OCI-LY7 (cell line): ENCODE measurements at regions of chr11 and their contacts with region 1.

Region 1: GRCh38 chr11:33376331-33377310 is 119.4 kb downstream of the HIPK3 start:
- DNase-seq: peak; percentile 76
- H3K4me3 ChIP-seq: peak overlapping the region; percentile 75
- H3K27ac ChIP-seq: peak overlapping the region; percentile 96
- H3K4me1 ChIP-seq: peaks cover 52% of the 10 kb centered on the region
- CTCF ChIP-seq: 0 out of 2 replicates have a peak, but pooled peaks have one; percentile 26

Region 2: GRCh38 chr11:33257897-33258630 is 118.6 kb before region 1 on chr11:
- CTCF ChIA-PET with region 1: no interaction called
- POLR2A ChIA-PET with region 1: no interaction called
- intact Hi-C with region 1: loop called (anchors 1 kb)
- DNase-seq: peak; percentile 84
- H3K4me3 ChIP-seq: peak overlapping the region; percentile 83
- H3K27ac ChIP-seq: peak overlapping the region; percentile 85
- H3K4me1 ChIP-seq: peaks cover 27% of the 10 kb centered on the region
- CTCF ChIP-seq: peak; percentile 43

Region 3: DNA sequence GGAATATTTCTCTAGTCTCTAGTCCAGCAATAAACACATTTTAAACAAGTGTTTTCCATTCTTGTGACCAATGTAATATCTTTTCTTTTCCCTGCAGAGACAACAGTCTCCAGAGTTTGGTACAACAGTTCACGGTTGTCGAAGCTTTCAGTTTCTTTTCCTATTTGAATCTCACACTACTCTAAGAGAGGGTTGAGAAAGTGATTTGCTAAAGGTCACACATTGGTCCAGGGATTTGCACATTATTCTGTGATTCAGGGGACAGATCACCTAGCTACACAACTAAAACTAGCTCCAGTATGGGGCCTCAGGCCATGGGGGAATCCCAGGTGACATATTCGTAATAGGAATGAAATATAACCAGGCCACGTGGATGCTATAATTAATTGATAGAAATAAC is 13.0 kb after region 1 on chr11:
- CTCF ChIA-PET with region 1: no interaction called
- POLR2A ChIA-PET with region 1: interaction called, 20 read pairs
- intact Hi-C with region 1: loop called (anchors 1 kb)
- DNase-seq: peak; percentile 52
- H3K4me3 ChIP-seq: peak overlapping the region; percentile 57
- H3K27ac ChIP-seq: peak overlapping the region; percentile 96
- H3K4me1 ChIP-seq: peaks cover 95% of the 10 kb centered on the region
- CTCF ChIP-seq: no peak

Region 4: GRCh38 chr11:33542921-33543320 is 166.3 kb after region 1 on chr11:
- CTCF ChIA-PET with region 1: no interaction called
- POLR2A ChIA-PET with region 1: interaction called, 3 read pairs
- intact Hi-C with region 1: loop called (anchors 5 kb)
- DNase-seq: peak; percentile 51
- H3K4me3 ChIP-seq: no peak overlapping the region
- H3K27ac ChIP-seq: no peak overlapping the region
- H3K4me1 ChIP-seq: peaks cover 42% of the 10 kb centered on the region
- CTCF ChIP-seq: peak; percentile 82

Region 5: GRCh38 chr11:33736148-33736809 is 359.7 kb after region 1 on chr11 and contains the start of gene CD59:
- CTCF ChIA-PET with region 1: no interaction called
- POLR2A ChIA-PET with region 1: no interaction called
- intact Hi-C with region 1: loop called (anchors 5 kb)
- DNase-seq: peak; percentile 83
- H3K4me3 ChIP-seq: peak within 1 kb of the TSS; percentile 86
- H3K27ac ChIP-seq: peak within 1 kb of the TSS; percentile 21
- H3K4me1 ChIP-seq: peaks cover 11% of the 10 kb centered on the region
- CTCF ChIP-seq: no peak
- total RNA-seq, gene CD59: 12.7 and 20.2 TPM in 2 replicates